ENCODE measurements at regions of chr5 and their contacts with region 1.

Region 1: GRCh38 chr5:139711067-139711905 is 63.1 kb downstream of the CXXC5 start:
- DNase-seq: peak; percentile 37 to 74 (median 53)
- ATAC-seq: peak; percentile 75
- H3K4me3 ChIP-seq: peak overlapping the region; percentile 58
- H3K4me3 Mint-ChIP-seq: peak overlapping the region; percentile 74 to 85 (median 80)
- H3K27ac ChIP-seq: peak overlapping the region; percentile 63
- H3K27ac Mint-ChIP-seq: peak overlapping the region in 6 of 9 donors; percentile 25 to 87 (median 64)
- H3K4me1 ChIP-seq: peaks cover 14 to 19% of the 10 kb centered on the region in 2 donors
- H3K4me1 Mint-ChIP-seq: peaks cover 10 to 31% (median 23%) of the 10 kb centered on the region in 7 donors
- H3K27me3 ChIP-seq: no peaks in the 10 kb centered on the region
- H3K27me3 Mint-ChIP-seq: peaks cover 0 to 51% (median 0%) of the 10 kb centered on the region in 5 donors

Region 2: GRCh38 chr5:139651853-139652787 is 59.2 kb before region 1 on chr5:
- CTCF ChIA-PET with region 1: no interaction called
- POLR2A ChIA-PET with region 1: no interaction called
- intact Hi-C with region 1: loop called in 1 of 2 experiments (anchors 2 kb)
- DNase-seq: peak in 3 of 9 donors; percentile 39 to 63 (median 54)
- ATAC-seq: peak; percentile 66
- H3K4me3 ChIP-seq: no peak overlapping the region
- H3K4me3 Mint-ChIP-seq: peak overlapping the region in 6 of 10 donors; percentile 5 to 94 (median 20)
- H3K27ac ChIP-seq: no peak overlapping the region
- H3K27ac Mint-ChIP-seq: peak overlapping the region in 1 of 9 donors; percentile 3
- H3K4me1 ChIP-seq: peaks cover 19 to 33% of the 10 kb centered on the region in 2 donors
- H3K4me1 Mint-ChIP-seq: peaks cover 12 to 44% (median 35%) of the 10 kb centered on the region in 7 donors
- H3K27me3 ChIP-seq: peaks cover 3 to 30% of the 10 kb centered on the region in 2 donors
- H3K27me3 Mint-ChIP-seq: peaks cover 36 to 58% (median 45%) of the 10 kb centered on the region in 5 donors

Region 3: GRCh38 chr5:139668064-139668880 is 43.0 kb before region 1 on chr5:
- CTCF ChIA-PET with region 1: no interaction called
- POLR2A ChIA-PET with region 1: no interaction called
- intact Hi-C with region 1: loop called (anchors 2 kb)
- DNase-seq: peak in 4 of 9 donors; percentile 21 to 48 (median 25)
- ATAC-seq: peak; percentile 14
- H3K4me3 ChIP-seq: peak overlapping the region; percentile 46
- H3K4me3 Mint-ChIP-seq: peak overlapping the region; percentile 60 to 86 (median 78)
- H3K27ac ChIP-seq: peak overlapping the region; percentile 46
- H3K27ac Mint-ChIP-seq: peak overlapping the region in 2 of 9 donors; percentile 31 to 89
- H3K4me1 ChIP-seq: peaks cover 36% of the 10 kb centered on the region in 2 donors
- H3K4me1 Mint-ChIP-seq: peaks cover 7 to 51% (median 34%) of the 10 kb centered on the region in 7 donors
- H3K27me3 ChIP-seq: peaks cover 0 to 3% of the 10 kb centered on the region in 2 donors
- H3K27me3 Mint-ChIP-seq: peaks cover 0 to 4% (median 3%) of the 10 kb centered on the region in 5 donors

Region 4: DNA sequence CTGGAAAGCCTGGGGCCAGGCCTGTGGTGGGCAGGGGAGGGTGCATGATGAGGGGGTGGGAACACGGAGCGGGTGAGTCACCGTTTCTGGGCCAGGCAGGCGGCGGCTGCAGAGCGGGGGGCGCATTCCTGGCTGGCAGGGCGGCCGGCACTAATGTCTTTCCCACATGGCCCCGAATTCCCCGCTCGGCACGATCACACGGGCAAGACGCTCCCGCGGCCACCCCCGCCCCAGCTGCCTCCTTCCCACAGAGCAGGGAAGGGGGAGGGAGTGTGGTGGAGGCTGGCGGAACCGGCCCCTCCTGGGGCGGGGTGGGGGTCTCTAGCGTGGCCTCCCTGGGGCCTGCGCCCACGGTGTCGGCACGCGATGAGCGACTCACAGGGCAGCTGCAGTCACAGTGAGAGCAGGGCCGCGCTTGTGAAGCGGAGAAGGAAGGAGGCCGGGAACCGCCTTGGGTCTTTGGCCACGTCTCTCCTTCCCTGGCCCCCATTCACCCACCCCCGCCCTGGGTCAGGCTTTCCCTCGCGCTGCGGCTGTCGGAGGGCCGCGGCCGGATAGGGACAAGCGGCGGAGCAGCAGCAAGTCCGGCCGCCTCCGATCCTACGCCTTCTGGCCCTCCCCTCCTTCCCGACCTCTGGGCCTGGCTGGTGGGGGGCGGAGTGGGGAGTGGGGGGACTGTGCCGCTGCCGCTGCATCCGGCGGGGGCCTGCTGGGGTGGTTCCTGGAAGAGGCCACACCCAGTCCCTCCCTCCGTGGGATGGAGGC is 14.2 kb before region 1 on chr5:
- CTCF ChIA-PET with region 1: interaction called, 3 read pairs
- POLR2A ChIA-PET with region 1: no interaction called
- intact Hi-C with region 1: loop called in 1 of 2 experiments (anchors 1 kb)
- DNase-seq: peak in 3 of 9 donors; percentile 17 to 24 (median 22)
- ATAC-seq: peak; percentile 45
- H3K4me3 ChIP-seq: peak overlapping the region; percentile 30
- H3K4me3 Mint-ChIP-seq: peak overlapping the region; percentile 45 to 86 (median 68)
- H3K27ac ChIP-seq: peak overlapping the region; percentile 33
- H3K27ac Mint-ChIP-seq: peak overlapping the region in 3 of 9 donors; percentile 15 to 70 (median 38)
- H3K4me1 ChIP-seq: peaks cover 3 to 11% of the 10 kb centered on the region in 2 donors
- H3K4me1 Mint-ChIP-seq: peaks cover 11 to 39% (median 20%) of the 10 kb centered on the region in 7 donors
- H3K27me3 ChIP-seq: no peaks in the 10 kb centered on the region
- H3K27me3 Mint-ChIP-seq: peaks cover 2 to 42% (median 18%) of the 10 kb centered on the region in 5 donors

Region 5: DNA sequence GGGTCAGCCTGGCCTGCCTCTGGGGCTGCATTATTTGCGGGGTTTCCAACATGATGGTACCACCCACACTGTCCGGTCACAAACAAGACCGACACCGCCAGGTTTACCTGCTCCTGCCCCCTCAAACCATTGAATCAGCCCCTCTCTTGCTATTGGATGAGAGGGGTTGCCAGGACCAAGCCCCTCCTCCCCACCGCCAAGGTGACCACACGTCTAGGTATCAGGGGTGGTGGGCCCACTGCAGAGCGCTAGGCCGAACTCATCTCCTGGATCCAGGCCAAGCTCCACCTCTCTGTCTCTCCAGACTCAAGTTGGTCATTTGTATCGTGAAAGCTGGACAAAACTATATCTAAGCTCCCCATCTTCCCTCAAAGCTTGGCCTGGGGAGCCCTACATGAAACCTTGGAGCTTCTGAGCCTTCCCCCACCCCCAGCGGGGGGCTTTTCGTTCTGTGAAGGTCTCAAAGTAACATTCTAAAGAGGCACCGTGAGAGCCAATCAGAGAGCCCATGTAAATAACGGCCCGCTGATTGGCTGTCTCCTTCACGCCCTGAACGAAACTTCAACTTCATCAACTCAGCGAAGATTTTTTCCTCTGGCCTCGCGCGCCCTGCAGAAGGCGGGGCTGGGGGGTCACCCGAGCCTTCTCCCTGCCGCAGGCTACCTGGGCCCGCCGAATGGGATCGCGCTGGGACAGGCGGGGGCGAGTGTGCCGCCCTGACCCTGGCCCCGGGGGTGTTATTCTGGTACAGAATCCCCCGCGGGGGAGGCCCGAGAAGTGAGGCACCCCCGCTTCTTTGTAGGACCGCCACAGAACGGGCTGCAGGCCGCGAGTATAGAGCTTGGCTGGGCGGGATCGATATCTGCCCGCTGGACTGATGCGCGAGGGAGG is 34.8 kb after region 1 on chr5:
- CTCF ChIA-PET with region 1: no interaction called
- POLR2A ChIA-PET with region 1: no interaction called
- intact Hi-C with region 1: loop called (anchors 1 to 5 kb)
- DNase-seq: peak; percentile 31 to 64 (median 41)
- ATAC-seq: peak; percentile 68
- H3K4me3 ChIP-seq: peak overlapping the region; percentile 79
- H3K4me3 Mint-ChIP-seq: peak overlapping the region; percentile 88 to 100 (median 91)
- H3K27ac ChIP-seq: no peak overlapping the region
- H3K27ac Mint-ChIP-seq: peak overlapping the region in 4 of 9 donors; percentile 13 to 82 (median 52)
- H3K4me1 ChIP-seq: peaks cover 7 to 8% of the 10 kb centered on the region in 2 donors
- H3K4me1 Mint-ChIP-seq: peaks cover 18 to 25% (median 23%) of the 10 kb centered on the region in 7 donors
- H3K27me3 ChIP-seq: no peaks in the 10 kb centered on the region
- H3K27me3 Mint-ChIP-seq: peaks cover 7 to 67% (median 15%) of the 10 kb centered on the region in 5 donors